AG04450 (cell line): ENCODE measurements at regions of chr5 and their contacts with region 1.

Region 1: GRCh38 chr5:73201547-73202513 is 28.8 kb downstream of the TMEM174 start:
- DNase-seq: peak; percentile 27
- H3K4me3 ChIP-seq: no peak overlapping the region
- H3K27ac ChIP-seq: no peak overlapping the region
- H3K27me3 ChIP-seq: peaks cover 8% of the 10 kb centered on the region
- CTCF ChIP-seq: peak; percentile 81

Region 2: DNA sequence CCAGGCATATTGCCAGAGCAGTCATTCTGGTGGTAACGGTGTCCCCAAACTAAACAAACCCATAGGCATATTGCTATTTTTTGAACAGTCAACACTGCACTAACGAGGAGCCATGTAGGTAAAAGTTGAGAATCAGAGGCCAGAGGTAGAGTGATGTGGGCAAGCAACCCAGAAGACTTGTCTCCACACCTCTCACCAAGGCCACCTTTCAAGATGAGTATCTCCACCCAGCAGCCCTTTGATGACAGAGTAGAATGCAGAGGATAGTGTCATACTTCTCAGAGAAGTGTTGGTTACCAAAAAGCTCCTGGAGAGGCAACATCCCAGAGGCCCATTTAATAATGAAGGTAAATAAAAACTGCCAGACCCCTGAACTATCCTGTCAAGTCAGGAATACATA is 182.1 kb before region 1 on chr5:
- CTCF ChIA-PET with region 1: no interaction called
- POLR2A ChIA-PET with region 1: no interaction called
- DNase-seq: no peak
- H3K4me3 ChIP-seq: no peak overlapping the region
- H3K27ac ChIP-seq: no peak overlapping the region
- H3K27me3 ChIP-seq: no peaks in the 10 kb centered on the region
- CTCF ChIP-seq: no peak

Region 3: DNA sequence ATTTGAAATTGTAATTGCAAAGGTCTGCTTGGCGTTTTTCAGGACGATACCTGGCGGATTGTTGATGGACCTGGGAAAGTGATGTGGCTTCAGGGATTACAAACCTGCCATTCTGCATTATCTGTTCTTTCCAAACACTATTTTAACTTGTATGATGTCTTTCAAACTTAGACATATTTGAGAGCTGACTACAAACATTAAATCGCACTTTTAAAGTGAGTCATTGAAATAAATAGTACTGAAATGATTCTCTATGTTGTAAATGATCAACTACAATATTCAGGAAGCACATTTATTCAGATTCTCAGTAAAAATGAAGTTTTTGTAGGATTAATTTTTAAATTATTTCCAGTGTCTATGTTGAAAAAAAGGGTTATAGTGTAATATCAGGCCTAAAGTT is 113.8 kb before region 1 on chr5:
- CTCF ChIA-PET with region 1: interaction called, 18 read pairs
- POLR2A ChIA-PET with region 1: no interaction called
- DNase-seq: no peak
- H3K4me3 ChIP-seq: no peak overlapping the region
- H3K27ac ChIP-seq: no peak overlapping the region
- H3K27me3 ChIP-seq: no peaks in the 10 kb centered on the region
- CTCF ChIP-seq: no peak

Region 4: GRCh38 chr5:73103870-73104299 is 97.9 kb before region 1 on chr5:
- CTCF ChIA-PET with region 1: interaction called, 16 read pairs
- POLR2A ChIA-PET with region 1: no interaction called
- DNase-seq: no peak
- H3K4me3 ChIP-seq: no peak overlapping the region
- H3K27ac ChIP-seq: no peak overlapping the region
- H3K27me3 ChIP-seq: no peaks in the 10 kb centered on the region
- CTCF ChIP-seq: no peak

Region 5: GRCh38 chr5:73189871-73190376 is 11.9 kb before region 1 on chr5:
- CTCF ChIA-PET with region 1: interaction called, 15 read pairs
- POLR2A ChIA-PET with region 1: no interaction called
- DNase-seq: peak; percentile 38
- H3K4me3 ChIP-seq: no peak overlapping the region; the same call in 1 of the 2 replicates
- H3K27ac ChIP-seq: peak overlapping the region; percentile 78
- H3K27me3 ChIP-seq: no peaks in the 10 kb centered on the region
- CTCF ChIP-seq: no peak